Activated naive CD4-positive, alpha-beta T cell treated with anti-CD3 and anti-CD28 coated beads, Interleukin-2, amount 10 ng/mL, durations not matched to agents 7 days and 5 days (primary cell): ENCODE measurements at regions of chr5 and their contacts with region 1.

Region 1: GRCh38 chr5:141878711-141879425 is 658 bp upstream of the PCDH1 start:
- DNase-seq: peak; percentile 92
- H3K4me3 Mint-ChIP-seq: peak overlapping the region; percentile 48
- H3K27ac Mint-ChIP-seq: no peak overlapping the region
- H3K4me1 Mint-ChIP-seq: peaks cover 22% of the 10 kb centered on the region
- H3K27me3 Mint-ChIP-seq: peaks cover 99% of the 10 kb centered on the region

Region 2: DNA sequence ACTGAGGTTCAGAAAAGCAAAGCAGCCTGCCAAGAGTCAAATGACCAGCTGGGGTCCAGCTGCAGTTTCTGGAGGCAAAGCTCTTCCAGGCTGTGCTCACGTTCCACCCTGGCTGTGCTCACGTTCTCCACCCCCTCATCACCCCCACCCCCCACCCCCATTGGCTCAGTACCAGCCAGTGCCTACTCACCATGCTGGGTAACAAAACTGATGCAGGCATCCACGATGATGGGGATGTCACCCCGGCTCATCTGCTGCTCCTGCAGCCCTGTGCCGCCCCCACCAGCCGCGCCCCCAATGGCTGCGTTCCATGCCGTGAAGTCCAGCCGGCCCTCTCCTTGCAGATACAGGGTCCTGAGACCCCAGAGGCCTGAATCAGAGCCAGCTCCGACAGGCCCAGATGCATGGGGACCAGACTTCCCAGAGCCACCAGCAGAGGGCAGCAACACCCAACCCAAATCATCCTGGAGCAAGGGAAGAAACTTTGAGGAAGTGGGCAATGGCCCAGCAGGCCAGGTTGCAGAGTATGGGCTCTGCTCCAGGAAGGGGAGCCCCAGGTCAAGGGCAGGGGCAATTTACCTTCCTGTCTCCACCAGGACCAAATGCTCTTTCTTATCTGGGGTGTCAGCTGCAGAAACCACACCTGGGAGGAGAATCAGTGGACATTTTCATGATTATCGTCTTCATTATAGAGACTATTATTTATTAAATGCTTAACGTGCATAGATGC is 214.0 kb before region 1 on chr5:
- CTCF ChIA-PET with region 1: interaction called, 27 read pairs
- DNase-seq: peak; percentile 84
- H3K4me3 Mint-ChIP-seq: no peak overlapping the region
- H3K27ac Mint-ChIP-seq: no peak overlapping the region
- H3K4me1 Mint-ChIP-seq: peaks cover 5% of the 10 kb centered on the region
- H3K27me3 Mint-ChIP-seq: peaks cover 19% of the 10 kb centered on the region

Region 3: GRCh38 chr5:141757402-141757801 is 121.5 kb before region 1 on chr5:
- CTCF ChIA-PET with region 1: interaction called, 10 read pairs
- DNase-seq: no peak
- H3K4me3 Mint-ChIP-seq: no peak overlapping the region
- H3K27ac Mint-ChIP-seq: no peak overlapping the region
- H3K4me1 Mint-ChIP-seq: no peaks in the 10 kb centered on the region
- H3K27me3 Mint-ChIP-seq: peaks cover 97% of the 10 kb centered on the region

Region 4: GRCh38 chr5:141825791-141826560 is 52.9 kb before region 1 on chr5:
- CTCF ChIA-PET with region 1: interaction called, 18 read pairs
- DNase-seq: peak; percentile 27
- H3K4me3 Mint-ChIP-seq: no peak overlapping the region
- H3K27ac Mint-ChIP-seq: no peak overlapping the region
- H3K4me1 Mint-ChIP-seq: no peaks in the 10 kb centered on the region
- H3K27me3 Mint-ChIP-seq: peaks cover 63% of the 10 kb centered on the region

Region 5: GRCh38 chr5:141923448-141924352 is 44.8 kb after region 1 on chr5 and contains the start of gene DELE1:
- CTCF ChIA-PET with region 1: interaction called, 14 read pairs
- DNase-seq: peak; percentile 96
- H3K4me3 Mint-ChIP-seq: peak within 1 kb of the TSS; percentile 89
- H3K27ac Mint-ChIP-seq: peak within 1 kb of the TSS; percentile 90
- H3K4me1 Mint-ChIP-seq: peaks cover 44% of the 10 kb centered on the region
- H3K27me3 Mint-ChIP-seq: no peaks in the 10 kb centered on the region

Region 6: DNA sequence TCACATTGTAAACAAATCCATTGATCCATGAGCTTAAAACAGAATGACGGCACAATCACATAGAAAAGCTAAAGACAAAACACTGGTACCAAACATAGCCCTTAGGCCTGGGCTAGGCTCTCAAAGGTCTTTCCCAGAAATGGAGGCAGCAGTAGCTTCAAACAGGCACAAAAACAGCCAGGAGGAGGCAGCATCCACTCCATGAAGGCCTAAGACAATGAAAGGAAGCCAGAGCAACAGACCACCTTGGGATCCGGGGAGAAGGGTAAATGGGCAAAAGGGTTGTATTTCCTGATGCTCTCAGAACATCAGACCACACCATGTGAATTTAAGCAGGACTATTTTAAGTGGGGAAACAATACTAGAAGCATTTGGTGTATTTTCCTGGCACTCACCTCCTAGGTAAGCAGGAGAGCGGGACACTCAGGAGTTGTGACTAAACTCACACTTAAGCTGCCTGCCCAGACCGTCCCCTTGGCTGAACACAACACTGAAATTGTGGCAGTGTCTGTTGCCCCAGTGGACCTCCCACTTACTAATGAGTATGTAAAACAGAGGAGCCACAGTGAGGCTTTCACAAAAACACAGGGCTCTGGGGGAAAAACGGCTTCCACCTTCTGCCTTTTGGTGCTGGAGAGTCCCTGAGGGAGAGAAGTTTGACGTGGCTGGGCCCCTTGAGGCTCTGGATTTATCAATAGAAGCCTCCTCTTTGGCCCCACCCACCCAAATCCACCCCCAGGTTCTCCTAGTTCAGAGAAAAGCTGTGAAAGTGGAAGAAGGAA is 122.0 kb after region 1 on chr5:
- CTCF ChIA-PET with region 1: no interaction called
- DNase-seq: no peak
- H3K4me3 Mint-ChIP-seq: no peak overlapping the region
- H3K27ac Mint-ChIP-seq: no peak overlapping the region
- H3K4me1 Mint-ChIP-seq: peaks cover 36% of the 10 kb centered on the region
- H3K27me3 Mint-ChIP-seq: no peaks in the 10 kb centered on the region